ENCODE measurements at regions of chr22 and their contacts with region 1.

Region 1: GRCh38 chr22:41688365-41689211 is at the start of gene SNU13:
- DNase-seq: peak; percentile 96 to 97
- ATAC-seq: peak; percentile 97
- H3K4me3 ChIP-seq: peak within 1 kb of the TSS; percentile 53 to 62
- H3K27ac ChIP-seq: peak within 1 kb of the TSS in 1 of 2 donors; percentile 80
- H3K4me1 ChIP-seq: no peaks in the 10 kb centered on the region
- H3K27me3 ChIP-seq: no peaks in the 10 kb centered on the region
- total RNA-seq, gene SNU13: 82.8 to 84.8 TPM

Region 2: DNA sequence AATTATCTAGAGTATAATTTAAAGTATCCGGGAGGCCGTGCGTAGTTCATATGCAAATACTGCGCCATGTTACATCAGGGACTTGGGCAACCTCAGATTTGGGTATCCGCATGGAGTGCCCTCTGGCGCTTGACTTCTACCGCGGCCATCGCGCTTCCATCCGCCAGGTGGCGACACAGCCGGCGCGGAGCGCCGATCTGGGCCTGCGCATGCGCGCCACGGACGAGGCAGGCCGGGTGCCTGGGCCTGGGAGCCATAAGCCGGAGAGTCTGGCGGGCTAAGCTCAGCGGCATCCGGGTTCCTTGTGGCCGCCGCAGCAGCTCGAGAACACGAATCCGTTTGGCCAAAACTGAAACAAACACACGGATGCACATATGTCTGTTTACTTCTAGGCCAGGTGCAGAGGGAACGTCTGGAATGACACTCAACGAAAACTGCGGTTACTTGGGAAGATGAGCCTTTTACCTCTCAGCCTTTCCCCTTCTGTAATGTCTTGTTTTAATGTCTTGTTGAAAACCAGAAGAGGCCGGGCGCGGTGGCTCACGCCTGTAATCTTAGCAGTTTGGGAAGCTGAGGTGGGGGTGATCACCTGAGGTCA is 21.8 kb before region 1 on chr22:
- intact Hi-C with region 1: loop called in 1 of 2 experiments (anchors 2 kb)
- DNase-seq: peak; percentile 92 to 96
- ATAC-seq: peak; percentile 97
- H3K4me3 ChIP-seq: no peak overlapping the region
- H3K27ac ChIP-seq: peak overlapping the region in 1 of 2 donors; percentile 71
- H3K4me1 ChIP-seq: no peaks in the 10 kb centered on the region
- H3K27me3 ChIP-seq: no peaks in the 10 kb centered on the region

Region 3: DNA sequence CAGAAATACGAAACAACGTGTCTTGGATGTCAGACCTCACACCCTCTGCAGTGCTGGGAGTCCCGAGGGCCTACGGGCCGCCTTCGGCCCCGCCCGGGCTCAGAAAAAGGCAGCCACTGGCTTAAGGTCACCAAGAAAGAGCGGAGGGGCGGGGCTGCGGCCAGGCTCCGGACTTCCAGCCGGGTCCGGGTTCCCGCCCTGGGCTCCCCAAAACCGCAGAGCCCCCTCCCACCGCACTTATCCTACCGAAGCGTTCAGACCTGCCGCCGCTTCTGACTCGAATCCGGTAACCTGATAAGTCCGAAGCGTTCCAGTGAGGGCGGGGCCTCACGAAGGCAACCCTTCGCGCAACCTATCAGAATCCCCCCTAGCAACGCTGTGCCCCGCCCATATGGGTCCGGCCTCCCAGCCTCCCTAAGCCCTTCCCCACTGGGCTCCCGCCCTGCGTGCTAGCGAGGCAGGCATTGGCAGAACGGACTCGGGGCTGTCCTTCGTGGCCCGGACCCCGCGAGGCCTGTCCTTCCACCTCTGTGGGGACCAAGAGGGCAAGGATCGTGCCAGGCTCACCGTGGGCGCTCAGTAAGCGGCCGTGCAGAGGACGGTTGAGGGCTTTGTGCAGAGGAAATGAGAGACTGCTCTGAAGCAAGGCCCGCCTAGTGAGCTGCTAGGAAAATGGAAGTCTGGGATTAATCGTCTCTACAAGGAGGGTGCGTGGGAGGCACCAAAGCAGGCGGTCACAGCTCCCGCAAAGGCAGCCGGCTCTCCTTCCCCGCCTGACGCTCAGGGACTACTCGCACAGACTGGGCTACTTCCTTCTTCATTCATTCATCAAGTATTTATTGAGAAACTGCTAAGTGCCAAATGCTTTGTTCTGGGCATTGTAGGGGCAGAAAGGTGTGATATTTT is 382.2 kb after region 1 on chr22 and contains the start of gene NAGA:
- intact Hi-C with region 1: loop called in 1 of 2 experiments (anchors 5 kb)
- DNase-seq: peak; percentile 98
- ATAC-seq: peak; percentile 94
- H3K4me3 ChIP-seq: peak within 1 kb of the TSS; percentile 26 to 51
- H3K27ac ChIP-seq: peak within 1 kb of the TSS in 1 of 2 donors; percentile 81
- H3K4me1 ChIP-seq: no peaks in the 10 kb centered on the region
- H3K27me3 ChIP-seq: no peaks in the 10 kb centered on the region
- total RNA-seq, gene NAGA: 22.3 to 27.6 TPM

Measured in aorta (tissue), 5 donors.